PC-9 (cell line): ENCODE measurements at regions of chr19 and their contacts with region 1.

Region 1: GRCh38 chr19:52570000-52570861 is at the start of gene ZNF701:
- DNase-seq: peak; percentile 79 to 98
- H3K4me3 ChIP-seq: peak within 1 kb of the TSS; percentile 81
- H3K27ac ChIP-seq: peak within 1 kb of the TSS; percentile 59
- H3K4me1 ChIP-seq: peaks cover 9% of the 10 kb centered on the region
- H3K27me3 ChIP-seq: no peaks in the 10 kb centered on the region
- CTCF ChIP-seq: peak; percentile 63
- total RNA-seq, gene ZNF701: 22.1 and 24.2 TPM in 2 replicates

Region 2: DNA sequence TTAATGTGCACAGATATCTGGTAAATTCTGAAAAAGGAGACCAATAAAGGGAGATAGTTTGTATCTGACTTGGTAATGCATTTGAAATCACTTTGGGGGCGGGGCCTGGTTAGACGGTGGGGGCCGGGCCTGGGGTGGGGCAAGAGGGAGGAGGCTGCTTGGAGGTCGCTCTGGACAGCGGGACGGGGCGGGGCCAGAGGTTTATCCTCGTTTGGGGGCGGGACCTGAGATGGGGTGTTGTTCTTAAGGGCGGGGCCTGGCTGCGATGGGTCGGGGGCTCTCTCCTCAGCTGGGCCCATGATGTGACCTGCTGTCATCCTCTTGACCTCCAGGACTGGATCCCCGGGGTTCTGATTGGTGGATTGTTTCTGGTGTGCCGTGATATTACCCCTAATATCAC is 47.7 kb before region 1 on chr19:
- CTCF ChIA-PET with region 1: no interaction called
- POLR2A ChIA-PET with region 1: no interaction called
- intact Hi-C with region 1: no loop called
- DNase-seq: no peak
- H3K4me3 ChIP-seq: no peak overlapping the region
- H3K27ac ChIP-seq: no peak overlapping the region
- H3K4me1 ChIP-seq: no peaks in the 10 kb centered on the region
- H3K27me3 ChIP-seq: peaks cover 8% of the 10 kb centered on the region; the same call in 1 of the 2 replicates
- CTCF ChIP-seq: no peak

Region 3: DNA sequence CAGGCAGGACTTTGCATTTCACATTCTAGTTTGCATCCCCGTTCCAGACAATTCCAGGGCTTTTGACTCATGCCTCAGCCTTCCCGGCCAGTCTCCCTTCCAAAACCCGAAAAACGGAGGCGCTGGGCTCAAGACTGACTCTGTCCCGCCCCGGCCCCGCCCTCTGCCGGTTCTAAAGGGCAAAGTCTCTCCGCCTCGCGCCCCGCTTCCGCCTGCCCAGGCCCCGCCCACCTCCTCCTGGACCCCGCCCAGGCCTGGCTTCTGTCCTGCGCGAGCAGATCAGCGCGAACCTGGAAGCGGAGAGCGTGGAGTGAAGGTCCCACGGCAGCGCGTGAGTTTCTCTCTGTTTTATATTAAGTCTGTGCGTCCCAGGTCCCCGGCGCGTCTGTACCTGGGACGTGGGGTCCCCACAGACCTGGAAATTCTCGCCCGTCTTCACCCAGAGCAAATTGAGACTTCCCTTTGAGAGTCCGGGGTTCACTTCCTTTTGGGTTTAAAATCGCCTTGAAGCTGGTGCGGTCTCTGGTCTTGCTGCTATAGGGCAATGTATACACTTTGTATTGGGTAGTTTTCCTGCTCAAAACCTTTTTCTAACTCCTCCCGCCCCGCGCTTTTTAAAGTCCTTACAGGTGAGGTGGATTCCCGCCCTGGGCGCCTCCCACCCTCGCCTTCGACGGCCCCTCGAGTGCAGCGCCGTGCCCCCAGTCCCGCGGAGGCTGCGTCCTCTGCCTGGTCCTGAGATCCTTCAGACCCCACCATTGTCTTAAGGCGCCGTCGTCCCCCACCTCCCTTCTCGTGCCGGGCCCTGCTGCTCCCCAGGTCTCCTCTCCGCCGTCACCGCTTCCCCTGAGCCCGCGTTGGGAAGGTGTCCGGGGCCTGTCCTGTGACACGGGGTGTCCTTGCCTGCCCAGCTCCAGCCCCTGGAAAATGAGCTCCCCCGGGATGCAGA is 31.1 kb after region 1 on chr19:
- CTCF ChIA-PET with region 1: no interaction called
- POLR2A ChIA-PET with region 1: no interaction called
- intact Hi-C with region 1: loop called (anchors 2 kb)
- DNase-seq: peak; percentile 72 to 95
- H3K4me3 ChIP-seq: peak overlapping the region; percentile 73
- H3K27ac ChIP-seq: no peak overlapping the region
- H3K4me1 ChIP-seq: no peaks in the 10 kb centered on the region; the same call in 1 of the 2 replicates
- H3K27me3 ChIP-seq: no peaks in the 10 kb centered on the region
- CTCF ChIP-seq: peak; percentile 57; the same call in 1 of the 2 replicates